ENCODE measurements at regions of chr22 and their contacts with region 1.

Region 1: GRCh38 chr22:41940832-41941765 is 5.9 kb downstream of the CENPM start:
- DNase-seq: peak; percentile 91
- H3K4me3 Mint-ChIP-seq: peak overlapping the region; percentile 69
- H3K27ac Mint-ChIP-seq: peak overlapping the region; percentile 100
- H3K4me1 Mint-ChIP-seq: peaks cover 69% of the 10 kb centered on the region
- H3K27me3 Mint-ChIP-seq: no peaks in the 10 kb centered on the region

Region 2: DNA sequence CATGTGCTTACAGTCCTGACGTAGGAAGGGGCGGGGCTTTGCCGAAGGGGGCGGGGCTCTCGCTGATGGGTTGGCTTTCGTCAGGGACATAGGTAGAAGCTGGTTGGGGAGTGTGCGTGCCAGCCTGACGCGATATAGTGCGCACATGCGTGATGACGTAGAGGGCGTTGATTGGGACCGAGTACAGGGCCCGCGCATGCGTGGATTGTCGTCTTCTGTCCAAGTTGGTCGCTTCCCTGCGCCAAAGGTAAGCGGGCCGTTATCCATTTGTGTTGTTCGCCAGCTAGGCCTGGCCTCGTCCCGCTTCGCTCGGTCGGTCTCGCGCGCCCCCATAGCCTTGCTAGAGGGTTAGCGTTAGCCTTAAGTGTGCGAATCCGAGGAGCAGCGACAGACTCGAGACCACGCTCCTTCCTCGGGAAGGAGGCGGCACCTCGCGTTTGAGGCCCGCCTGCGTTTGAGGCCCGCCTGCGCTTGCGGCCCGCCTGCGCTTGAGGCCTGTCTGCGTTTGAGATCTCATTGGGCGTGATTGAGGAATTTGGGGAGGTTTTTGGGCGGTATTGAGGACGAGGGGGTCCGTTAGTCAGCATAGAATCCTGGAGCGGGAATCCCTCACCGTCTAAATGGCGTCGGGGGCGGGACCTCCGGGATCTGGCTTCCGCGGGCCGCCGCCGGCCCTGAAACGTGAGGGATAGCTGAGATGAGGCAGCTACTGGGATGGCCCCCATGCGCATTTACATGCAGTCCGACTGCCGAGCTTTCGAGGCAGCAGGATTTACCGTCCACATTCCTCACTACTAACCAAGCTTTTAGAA is 319.8 kb before region 1 on chr22 and contains the start of gene XRCC6:
- CTCF ChIA-PET with region 1: no interaction called
- intact Hi-C with region 1: loop called (anchors 2 kb)
- DNase-seq: peak; percentile 100
- H3K4me3 Mint-ChIP-seq: peak within 1 kb of the TSS; percentile 98
- H3K27ac Mint-ChIP-seq: peak within 1 kb of the TSS; percentile 98
- H3K4me1 Mint-ChIP-seq: peaks cover 56% of the 10 kb centered on the region
- H3K27me3 Mint-ChIP-seq: no peaks in the 10 kb centered on the region
- total RNA-seq, gene XRCC6: 424 to 436 TPM

Region 3: DNA sequence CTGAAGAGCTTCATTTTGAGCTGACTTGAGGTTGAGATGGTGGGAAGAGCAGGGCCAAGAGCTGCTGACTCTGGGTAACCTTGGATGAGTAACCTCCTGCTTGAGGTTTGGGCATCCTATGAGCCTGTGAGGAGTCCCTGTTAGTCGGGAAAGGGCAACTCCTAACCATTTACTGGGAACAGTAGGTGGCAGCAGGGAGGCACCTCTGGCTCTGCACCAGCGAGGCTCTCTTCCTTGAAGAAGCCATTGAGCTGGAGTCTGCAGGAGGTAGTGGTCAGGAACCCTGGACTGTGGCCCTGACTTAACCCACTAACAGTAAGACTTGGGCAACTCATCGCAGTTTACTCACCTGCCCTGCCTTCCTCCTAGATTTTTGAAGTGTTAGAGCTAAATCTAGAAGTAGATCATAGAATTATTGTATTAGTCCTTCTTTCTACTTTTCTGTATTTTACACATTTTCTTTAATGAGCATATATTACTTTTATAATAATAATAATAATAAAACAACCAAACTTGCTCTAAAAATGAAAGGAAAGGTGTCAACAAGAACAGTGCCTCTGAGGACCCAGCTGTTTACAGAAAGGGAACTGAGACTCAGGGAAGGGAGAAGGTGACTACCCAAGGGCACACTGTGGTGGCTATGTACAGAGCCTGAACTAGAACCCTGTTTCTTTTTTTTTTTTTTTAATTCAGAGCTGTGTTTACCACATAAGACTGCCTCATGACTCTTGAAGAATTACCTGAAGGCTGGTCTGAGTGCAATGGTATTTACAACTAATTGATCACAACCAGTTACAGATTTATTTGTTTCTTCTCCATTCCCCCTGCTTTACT is 194.3 kb before region 1 on chr22:
- CTCF ChIA-PET with region 1: interaction called, 13 read pairs
- intact Hi-C with region 1: loop called (anchors 1 kb)
- DNase-seq: peak; percentile 83
- H3K4me3 Mint-ChIP-seq: no peak overlapping the region
- H3K27ac Mint-ChIP-seq: no peak overlapping the region
- H3K4me1 Mint-ChIP-seq: peaks cover 6% of the 10 kb centered on the region
- H3K27me3 Mint-ChIP-seq: no peaks in the 10 kb centered on the region

Region 4: DNA sequence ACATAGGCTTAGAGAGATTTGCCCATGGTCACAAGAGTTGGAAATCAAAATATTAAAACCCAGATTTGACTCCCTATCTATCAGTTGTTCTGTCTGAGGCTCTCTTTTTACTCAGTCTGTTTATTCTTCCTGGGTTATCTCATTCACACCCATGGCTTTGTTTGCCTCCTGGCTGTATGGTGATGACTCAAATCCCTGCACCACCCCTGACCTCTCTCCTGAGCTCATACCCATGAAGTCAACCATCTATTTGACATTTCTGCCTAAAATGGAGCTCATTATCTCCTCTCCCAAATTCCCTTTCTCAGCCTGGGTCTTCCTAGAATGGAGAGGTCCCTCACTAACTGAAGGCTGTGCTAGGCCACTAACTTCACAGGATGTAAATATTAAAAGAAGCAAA is 168.5 kb before region 1 on chr22:
- CTCF ChIA-PET with region 1: no interaction called
- intact Hi-C with region 1: no loop called
- DNase-seq: no peak
- H3K4me3 Mint-ChIP-seq: no peak overlapping the region
- H3K27ac Mint-ChIP-seq: no peak overlapping the region
- H3K4me1 Mint-ChIP-seq: peaks cover 9% of the 10 kb centered on the region
- H3K27me3 Mint-ChIP-seq: no peaks in the 10 kb centered on the region

Region 5: GRCh38 chr22:41822317-41823060 is 118.6 kb before region 1 on chr22:
- CTCF ChIA-PET with region 1: interaction called, 15 read pairs
- intact Hi-C with region 1: loop called (anchors 1 kb)
- DNase-seq: peak; percentile 65
- H3K4me3 Mint-ChIP-seq: no peak overlapping the region
- H3K27ac Mint-ChIP-seq: peak overlapping the region; percentile 81
- H3K4me1 Mint-ChIP-seq: peaks cover 33% of the 10 kb centered on the region
- H3K27me3 Mint-ChIP-seq: no peaks in the 10 kb centered on the region

Region 6: DNA sequence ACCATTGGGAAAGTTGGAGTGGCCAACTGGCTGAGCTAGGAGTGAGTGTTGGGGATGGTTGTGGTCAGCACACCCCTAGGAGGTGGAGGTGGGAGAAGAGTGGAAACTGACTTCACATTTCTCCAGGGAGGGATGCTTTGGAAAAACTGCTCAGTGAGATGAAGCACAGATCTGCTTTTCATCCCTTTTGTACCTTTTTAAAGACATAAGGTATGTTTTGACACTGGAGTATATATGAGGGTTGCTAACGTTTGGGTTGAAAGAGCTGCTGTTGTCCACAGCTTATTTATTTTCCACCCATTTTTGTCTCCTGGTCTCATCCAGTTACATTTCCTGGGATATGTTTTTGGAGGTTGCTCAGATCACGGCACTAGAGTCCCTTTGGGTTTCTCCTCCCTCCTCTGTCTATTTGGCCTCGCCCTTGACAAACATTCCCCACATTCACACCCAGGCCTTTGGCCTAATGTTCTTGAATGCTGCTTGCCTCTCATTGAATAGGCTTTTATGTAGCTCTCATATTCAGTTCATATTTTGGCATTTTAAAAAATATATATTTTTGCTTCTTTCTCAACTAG is 99.9 kb before region 1 on chr22:
- CTCF ChIA-PET with region 1: interaction called, 3 read pairs
- intact Hi-C with region 1: loop called (anchors 1 kb)
- DNase-seq: no peak
- H3K4me3 Mint-ChIP-seq: no peak overlapping the region
- H3K27ac Mint-ChIP-seq: peak overlapping the region; percentile 57
- H3K4me1 Mint-ChIP-seq: peaks cover 82% of the 10 kb centered on the region
- H3K27me3 Mint-ChIP-seq: no peaks in the 10 kb centered on the region

Region 7: DNA sequence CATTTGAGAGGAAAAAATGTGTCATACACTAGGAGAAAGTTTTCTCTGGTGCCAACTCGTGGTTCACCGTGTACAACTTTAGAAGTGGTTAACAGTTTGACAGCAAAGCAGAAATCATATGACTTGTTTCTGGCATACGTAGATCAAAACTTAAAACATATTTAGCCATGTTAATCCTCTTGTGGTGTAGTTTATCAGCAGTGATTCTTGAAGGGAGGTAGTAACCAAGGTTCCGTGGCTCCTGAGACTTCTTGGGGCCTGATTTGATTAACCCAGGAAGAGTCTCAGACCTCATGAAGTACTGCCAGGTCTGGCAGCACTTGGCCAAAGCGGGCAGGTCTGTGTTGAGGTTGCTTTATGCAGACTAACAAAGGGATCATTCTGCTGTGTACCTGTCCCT is 67.7 kb before region 1 on chr22:
- CTCF ChIA-PET with region 1: interaction called, 3 read pairs
- intact Hi-C with region 1: loop called (anchors 1 kb)
- DNase-seq: peak; percentile 78
- H3K4me3 Mint-ChIP-seq: peak overlapping the region; percentile 62
- H3K27ac Mint-ChIP-seq: peak overlapping the region; percentile 95
- H3K4me1 Mint-ChIP-seq: peaks cover 75% of the 10 kb centered on the region
- H3K27me3 Mint-ChIP-seq: no peaks in the 10 kb centered on the region

Region 8: GRCh38 chr22:41925655-41926460 is 15.2 kb before region 1 on chr22:
- CTCF ChIA-PET with region 1: interaction called, 14 read pairs
- intact Hi-C with region 1: no loop called
- DNase-seq: peak; percentile 80
- H3K4me3 Mint-ChIP-seq: peak overlapping the region; percentile 63
- H3K27ac Mint-ChIP-seq: no peak overlapping the region
- H3K4me1 Mint-ChIP-seq: peaks cover 28% of the 10 kb centered on the region
- H3K27me3 Mint-ChIP-seq: peaks cover 6% of the 10 kb centered on the region

Region 9: DNA sequence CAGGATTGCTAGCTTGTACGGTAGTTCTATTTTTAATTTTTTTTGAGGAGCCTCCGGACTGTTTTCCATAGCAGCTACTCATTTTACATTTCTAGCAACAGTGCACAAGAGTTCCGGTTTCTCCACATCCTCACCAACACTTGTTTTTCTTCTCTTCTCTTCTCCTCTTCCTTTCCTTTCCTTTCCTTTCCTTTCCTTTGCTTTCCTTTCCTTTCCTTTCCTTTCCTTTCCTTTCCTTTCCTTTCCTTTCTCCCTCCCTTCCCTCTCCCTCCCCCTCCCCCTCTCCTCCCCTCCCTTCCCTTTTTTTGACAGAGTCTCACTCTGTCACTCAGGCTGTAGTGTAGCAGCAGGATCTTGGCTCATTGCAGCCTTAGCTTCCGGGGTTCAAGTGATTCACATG is 66.8 kb after region 1 on chr22:
- CTCF ChIA-PET with region 1: no interaction called
- intact Hi-C with region 1: no loop called
- DNase-seq: no peak
- H3K4me3 Mint-ChIP-seq: no peak overlapping the region
- H3K27ac Mint-ChIP-seq: no peak overlapping the region
- H3K4me1 Mint-ChIP-seq: no peaks in the 10 kb centered on the region
- H3K27me3 Mint-ChIP-seq: peaks cover 6% of the 10 kb centered on the region

Region 10: GRCh38 chr22:42132457-42132856 is 191.4 kb after region 1 on chr22:
- CTCF ChIA-PET with region 1: no interaction called
- intact Hi-C with region 1: no loop called
- DNase-seq: no peak
- H3K4me3 Mint-ChIP-seq: no peak overlapping the region
- H3K27ac Mint-ChIP-seq: no peak overlapping the region
- H3K4me1 Mint-ChIP-seq: no peaks in the 10 kb centered on the region
- H3K27me3 Mint-ChIP-seq: no peaks in the 10 kb centered on the region